ENCODE measurements at regions of chr1 and their contacts with region 1.

Region 1: DNA sequence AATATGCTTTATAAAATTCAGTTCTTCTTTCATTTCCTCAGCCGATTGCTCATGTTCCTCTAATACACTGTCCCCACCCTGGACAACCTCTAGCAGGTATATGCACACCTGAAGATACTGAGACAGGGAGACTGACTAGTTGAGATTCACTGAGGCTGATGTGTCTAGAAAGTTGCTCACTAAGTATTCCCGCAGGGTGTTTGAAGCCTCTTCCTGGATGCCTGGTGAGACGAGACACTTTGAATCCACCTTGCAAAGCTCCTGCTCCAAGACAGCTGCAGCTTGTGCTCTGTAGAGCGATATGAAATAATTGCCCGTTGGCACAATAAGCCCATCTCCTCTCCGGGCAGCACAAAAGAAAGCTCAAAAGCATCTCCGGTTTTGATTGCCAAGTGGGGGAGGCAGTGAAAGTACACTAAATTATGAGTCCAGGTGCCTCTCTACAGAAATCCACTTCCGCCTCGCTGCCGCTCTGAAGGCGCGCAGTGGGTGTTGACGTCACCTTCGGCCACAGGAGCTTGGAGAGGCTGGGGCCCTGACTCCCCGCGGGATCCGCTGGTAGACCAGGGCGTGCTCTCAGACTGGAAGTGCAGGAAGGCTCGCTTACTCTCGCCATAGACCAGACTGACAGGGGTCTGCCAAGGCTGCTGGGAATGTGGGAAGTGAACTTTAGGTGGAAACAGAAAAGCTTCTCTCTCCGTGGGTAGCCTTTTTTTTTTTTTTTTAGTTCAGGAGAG is 46.3 kb downstream of the GPA33 start:
- DNase-seq: peak; percentile 42 to 82 (median 68)
- ATAC-seq: peak; percentile 90 to 100 (median 96)
- H3K4me3 ChIP-seq: peak overlapping the region; percentile 53 to 62
- H3K4me3 Mint-ChIP-seq: peak overlapping the region; percentile 77 to 88 (median 82)
- H3K27ac ChIP-seq: peak overlapping the region; percentile 10
- H3K27ac Mint-ChIP-seq: peak overlapping the region; percentile 49 to 73
- H3K4me1 ChIP-seq: peaks cover 2% of the 10 kb centered on the region in 2 experiments
- H3K4me1 Mint-ChIP-seq: peaks cover 16 to 19% (median 17%) of the 10 kb centered on the region in 3 donors
- H3K27me3 ChIP-seq: peaks cover 0 to 4% of the 10 kb centered on the region in 2 experiments
- H3K27me3 Mint-ChIP-seq: peaks cover 9 to 11% of the 10 kb centered on the region in 2 donors

Region 2: GRCh38 chr1:167059045-167059808 is 15.3 kb after region 1 on chr1:
- CTCF ChIA-PET with region 1: interaction called, 6 to 24 read pairs
- POLR2A ChIA-PET with region 1: interaction called, 4 to 5 read pairs
- DNase-seq: peak; percentile 12 to 82 (median 60)
- ATAC-seq: peak; percentile 63 to 76 (median 72)
- H3K4me3 ChIP-seq: no peak overlapping the region
- H3K4me3 Mint-ChIP-seq: no peak overlapping the region
- H3K27ac ChIP-seq: no peak overlapping the region
- H3K27ac Mint-ChIP-seq: peak overlapping the region; percentile 57 to 69
- H3K4me1 ChIP-seq: peaks cover 0 to 6% of the 10 kb centered on the region in 2 experiments
- H3K4me1 Mint-ChIP-seq: peaks cover 6 to 8% (median 8%) of the 10 kb centered on the region in 3 donors
- H3K27me3 ChIP-seq: no peaks in the 10 kb centered on the region
- H3K27me3 Mint-ChIP-seq: no peaks in the 10 kb centered on the region

Region 3: DNA sequence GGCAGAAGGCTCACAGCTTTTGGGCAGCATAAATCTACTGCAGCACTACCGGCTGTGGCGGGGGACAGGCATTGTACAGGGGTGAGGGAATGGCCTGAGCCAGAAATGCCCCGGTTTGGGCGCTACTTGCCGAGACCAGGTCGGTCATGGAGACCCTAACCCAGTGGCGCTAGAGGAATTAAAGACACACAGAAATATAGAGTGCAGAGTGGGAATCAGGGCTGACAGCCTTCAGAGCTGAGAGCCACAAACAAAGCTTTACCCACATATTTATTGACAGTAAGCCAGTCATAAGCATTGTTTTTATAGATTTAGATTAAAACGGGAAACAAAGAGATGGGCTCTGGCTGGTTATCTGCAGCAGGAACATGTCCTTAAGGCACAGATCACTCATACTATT is 278.6 kb after region 1 on chr1:
- CTCF ChIA-PET with region 1: interaction called in 1 of 2 experiments, 11 read pairs
- POLR2A ChIA-PET with region 1: no interaction called
- DNase-seq: no peak
- ATAC-seq: no peak
- H3K4me3 ChIP-seq: no peak overlapping the region
- H3K4me3 Mint-ChIP-seq: no peak overlapping the region
- H3K27ac ChIP-seq: no peak overlapping the region
- H3K27ac Mint-ChIP-seq: no peak overlapping the region
- H3K4me1 ChIP-seq: no peaks in the 10 kb centered on the region
- H3K4me1 Mint-ChIP-seq: peaks cover under 1 to 7% (median under 1%) of the 10 kb centered on the region in 3 donors
- H3K27me3 ChIP-seq: no peaks in the 10 kb centered on the region
- H3K27me3 Mint-ChIP-seq: no peaks in the 10 kb centered on the region